GM10248 (cell line): ENCODE measurements at regions of chr1 and their contacts with region 1.

Region 1: DNA sequence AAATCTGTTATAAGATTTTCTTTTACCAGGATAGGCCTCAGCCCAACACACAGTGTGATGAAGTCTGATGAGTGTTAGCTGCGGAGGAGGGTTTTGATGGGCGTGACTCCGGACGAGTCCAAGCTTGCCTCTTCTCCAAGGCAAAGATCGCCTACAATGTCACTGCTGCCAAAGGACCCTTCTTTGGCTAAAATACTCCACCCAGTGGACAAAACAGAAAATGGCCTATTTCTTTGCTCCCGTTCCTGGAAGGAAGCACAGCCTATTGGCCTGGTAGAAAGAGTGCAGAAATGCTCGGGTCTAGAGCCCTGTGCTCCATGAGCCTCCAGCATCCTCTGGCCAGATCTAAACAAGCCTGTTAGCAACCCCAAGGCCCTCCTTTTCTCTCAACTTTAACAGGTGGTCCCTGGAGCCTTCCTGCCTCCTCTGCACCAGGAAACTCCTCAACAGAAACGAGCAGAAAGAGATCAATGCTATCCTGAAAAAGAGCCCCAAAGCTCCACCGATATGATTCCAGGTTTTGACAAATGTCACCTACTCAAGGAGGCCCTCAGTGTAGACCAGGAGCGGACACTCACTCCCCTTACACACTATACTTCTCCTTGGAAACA is 3.4 kb upstream of the CASQ2 start:
- DNase-seq: peak; percentile 68
- CTCF ChIP-seq: peak; percentile 73

Region 2: DNA sequence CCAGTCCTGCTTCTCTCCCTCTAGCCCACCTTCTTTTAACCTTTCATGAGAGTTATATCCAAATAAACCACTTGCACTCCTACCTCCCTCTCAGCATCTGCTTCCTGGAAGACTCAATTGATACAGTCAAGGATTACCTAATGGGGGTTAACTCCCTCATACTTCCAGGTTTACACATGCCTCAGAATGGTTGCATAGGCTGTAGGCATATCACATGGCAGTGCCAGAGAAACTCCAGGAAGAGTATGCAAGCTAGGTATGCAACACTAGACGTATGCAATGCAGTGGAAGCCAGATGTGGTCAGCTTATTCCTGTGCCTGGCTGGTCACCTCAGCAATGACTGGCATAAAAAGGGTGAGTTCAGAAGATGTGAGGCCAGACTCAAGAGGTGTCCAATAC is 162.9 kb before region 1 on chr1:
- CTCF ChIA-PET with region 1: interaction called, 27 read pairs
- POLR2A ChIA-PET with region 1: no interaction called
- DNase-seq: no peak
- CTCF ChIP-seq: no peak

Region 3: GRCh38 chr1:115717541-115717940 is 54.4 kb before region 1 on chr1:
- CTCF ChIA-PET with region 1: interaction called, 62 read pairs
- POLR2A ChIA-PET with region 1: no interaction called
- DNase-seq: peak; percentile 29
- CTCF ChIP-seq: peak; percentile 47

Region 4: DNA sequence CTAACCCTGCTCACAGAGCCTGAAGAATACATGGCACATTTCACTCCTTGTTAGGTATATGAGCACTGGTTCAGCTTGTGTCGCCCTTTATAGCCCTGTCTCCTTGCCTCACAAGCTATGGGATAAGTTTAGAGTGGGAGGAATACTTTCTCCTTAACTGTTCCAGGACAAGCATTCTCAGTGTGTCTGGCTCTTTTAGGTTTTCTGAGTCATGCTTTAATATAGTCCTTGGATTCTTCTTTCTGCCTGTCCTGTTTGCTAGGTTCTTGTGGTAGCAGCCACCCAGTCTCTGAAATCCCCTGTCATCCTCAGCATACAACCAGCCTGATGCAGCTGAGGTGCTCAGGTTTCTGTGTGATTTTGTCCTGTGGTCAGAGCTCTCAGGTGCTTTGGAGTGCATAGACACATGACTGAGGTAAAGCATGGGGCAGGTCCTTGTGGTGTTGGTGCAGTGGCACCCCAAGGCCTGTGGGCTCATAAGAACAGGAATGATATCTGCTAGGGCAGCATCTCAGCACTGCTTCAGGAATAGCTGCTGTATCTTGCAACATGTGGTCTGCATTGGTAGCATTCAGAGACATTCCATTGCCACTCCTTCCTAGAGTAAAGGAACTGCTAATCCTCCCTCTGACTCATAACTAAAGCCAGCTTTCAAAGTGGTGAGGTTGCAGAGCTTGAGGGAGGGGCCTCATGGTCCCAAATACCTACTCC is 10.8 kb after region 1 on chr1:
- CTCF ChIA-PET with region 1: interaction called, 16 read pairs
- POLR2A ChIA-PET with region 1: no interaction called
- DNase-seq: no peak
- CTCF ChIP-seq: no peak

Region 5: GRCh38 chr1:115924770-115925169 is 152.8 kb after region 1 on chr1:
- CTCF ChIA-PET with region 1: no interaction called
- POLR2A ChIA-PET with region 1: no interaction called
- DNase-seq: no peak
- CTCF ChIP-seq: no peak

Region 6: GRCh38 chr1:115987623-115988022 is 215.7 kb after region 1 on chr1:
- CTCF ChIA-PET with region 1: no interaction called
- POLR2A ChIA-PET with region 1: no interaction called
- DNase-seq: no peak
- CTCF ChIP-seq: no peak